CD4-positive, alpha-beta memory T cell (primary cell): ENCODE measurements at regions of chr6 and their contacts with region 1.

Region 1: DNA sequence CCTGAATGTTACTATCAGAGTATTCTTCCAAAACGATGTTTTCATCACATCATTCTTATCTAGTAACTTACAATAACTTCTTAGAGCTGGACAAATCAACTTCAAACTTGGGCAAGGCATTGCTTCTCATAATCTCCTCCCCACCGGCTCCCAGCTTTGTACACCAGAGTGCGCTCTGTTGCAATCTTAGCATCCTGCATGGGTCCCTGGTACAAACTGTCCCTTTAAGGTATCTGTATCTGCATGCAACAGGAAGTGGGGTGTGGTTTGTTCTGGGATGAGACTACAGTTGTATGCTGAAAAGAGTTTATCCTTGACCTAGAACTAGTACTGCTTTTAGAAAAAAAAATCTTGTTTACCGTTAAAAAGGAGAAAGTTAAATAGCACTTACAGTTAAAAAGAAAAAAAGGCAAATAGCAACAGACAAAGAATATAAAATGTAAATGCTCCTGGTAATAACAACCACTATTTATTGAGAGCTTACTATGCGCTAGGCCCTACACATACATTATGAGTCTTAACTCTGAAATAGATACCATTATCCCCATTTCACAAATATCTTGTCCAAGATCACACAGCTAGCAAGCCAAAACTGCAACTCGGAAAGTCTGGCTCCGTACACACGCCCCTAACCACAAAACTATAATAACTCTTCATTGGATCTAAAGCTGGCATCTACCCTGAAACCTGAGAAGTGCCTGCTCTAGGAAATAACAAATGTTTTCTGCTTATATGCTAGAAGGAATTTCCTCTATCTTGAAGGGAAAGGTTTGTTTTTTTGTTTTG is 9.8 kb upstream of the HECA start:
- DNase-seq: peak; percentile 85 to 88 (median 86)
- H3K4me3 ChIP-seq: peak overlapping the region in 1 of 2 donors; percentile 34
- H3K4me3 Mint-ChIP-seq: peak overlapping the region; percentile 57 to 80 (median 71)
- H3K27ac ChIP-seq: peak overlapping the region; percentile 55
- H3K27ac Mint-ChIP-seq: peak overlapping the region; percentile 79 to 98 (median 94)
- H3K4me1 ChIP-seq: peaks cover 55% of the 10 kb centered on the region
- H3K4me1 Mint-ChIP-seq: peaks cover 43 to 63% (median 51%) of the 10 kb centered on the region in 4 donors
- H3K27me3 ChIP-seq: no peaks in the 10 kb centered on the region
- H3K27me3 Mint-ChIP-seq: no peaks in the 10 kb centered on the region

Region 2: DNA sequence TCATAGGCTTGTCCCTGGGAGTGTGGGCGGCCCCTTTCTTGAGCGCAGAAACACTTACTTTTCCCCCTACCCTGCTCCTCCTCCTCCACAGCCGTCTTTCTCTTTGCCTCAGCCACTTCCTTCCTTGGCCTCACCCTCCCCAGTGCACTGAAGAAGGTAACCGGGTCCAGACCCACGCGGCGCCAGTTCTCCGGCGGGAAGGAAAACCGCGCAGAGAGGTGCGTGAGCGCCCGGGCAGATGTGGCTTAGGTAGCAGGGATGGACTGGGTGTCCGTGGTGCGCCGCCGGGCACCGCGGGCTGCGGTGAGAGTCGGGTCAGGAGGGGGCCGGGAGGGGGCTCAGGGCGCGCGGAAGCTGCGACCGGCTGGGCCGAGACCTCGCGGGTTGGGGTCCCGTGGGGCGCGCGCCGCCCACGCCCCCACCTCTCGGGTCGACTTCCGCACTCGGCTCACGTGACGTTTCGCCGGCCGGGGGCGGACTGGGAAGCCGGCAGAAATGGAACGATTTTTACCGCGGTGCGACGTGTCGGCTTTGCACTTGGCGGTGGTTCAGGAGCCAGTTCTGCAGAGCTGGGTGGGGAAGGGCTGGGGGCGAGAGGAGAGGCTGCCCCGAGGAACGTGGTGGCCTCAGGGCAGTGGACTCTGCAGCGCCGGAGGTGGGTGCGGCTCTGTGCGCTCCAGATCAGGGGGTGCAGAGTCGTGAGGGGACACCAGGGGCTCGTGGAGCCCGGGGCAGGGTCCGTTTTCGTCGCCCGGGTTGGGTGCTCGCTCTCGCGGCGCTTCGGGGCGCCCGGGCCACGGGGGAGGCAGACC is 96.2 kb before region 1 on chr6 and contains the start of gene ABRACL:
- CTCF ChIA-PET with region 1: interaction called, 3 read pairs
- POLR2A ChIA-PET with region 1: interaction called, 22 read pairs
- intact Hi-C with region 1: no loop called
- DNase-seq: peak; percentile 74 to 88 (median 75)
- H3K4me3 ChIP-seq: peak within 1 kb of the TSS; percentile 59 to 97
- H3K4me3 Mint-ChIP-seq: peak within 1 kb of the TSS in 5 of 8 donors; percentile 93 to 98 (median 95)
- H3K27ac ChIP-seq: peak within 1 kb of the TSS; percentile 88
- H3K27ac Mint-ChIP-seq: peak within 1 kb of the TSS; percentile 88 to 98 (median 92)
- H3K4me1 ChIP-seq: peaks cover 46% of the 10 kb centered on the region
- H3K4me1 Mint-ChIP-seq: peaks cover 22 to 34% (median 28%) of the 10 kb centered on the region in 4 donors
- H3K27me3 ChIP-seq: no peaks in the 10 kb centered on the region
- H3K27me3 Mint-ChIP-seq: no peaks in the 10 kb centered on the region
- total RNA-seq, gene ABRACL: 103 to 112 TPM

Region 3: DNA sequence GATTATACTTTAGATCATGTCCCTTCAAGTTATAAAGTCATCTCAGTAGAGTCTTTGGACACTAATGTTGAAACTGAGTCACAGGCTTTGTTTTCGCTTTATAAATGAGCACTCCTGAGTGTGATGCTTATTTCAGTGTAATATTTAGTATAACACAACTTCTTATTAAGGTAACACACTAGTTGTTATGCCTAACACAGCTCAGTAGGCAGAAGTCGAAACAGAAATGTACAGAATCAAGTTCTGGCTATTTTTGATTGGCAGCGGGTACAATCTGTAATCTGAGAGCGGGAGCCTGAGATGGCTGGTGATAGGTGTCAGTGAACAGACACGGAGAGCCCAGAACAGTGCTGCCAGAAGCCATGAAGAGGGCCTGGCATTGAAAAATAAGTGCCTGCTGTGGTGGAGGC is 21.2 kb after region 1 on chr6:
- CTCF ChIA-PET with region 1: interaction called, 7 read pairs
- POLR2A ChIA-PET with region 1: interaction called, 83 read pairs
- intact Hi-C with region 1: no loop called
- DNase-seq: no peak
- H3K4me3 ChIP-seq: peak overlapping the region; percentile 39 to 40
- H3K4me3 Mint-ChIP-seq: peak overlapping the region; percentile 66 to 90 (median 82)
- H3K27ac ChIP-seq: peak overlapping the region; percentile 50
- H3K27ac Mint-ChIP-seq: peak overlapping the region; percentile 69 to 92 (median 86)
- H3K4me1 ChIP-seq: peaks cover 97% of the 10 kb centered on the region
- H3K4me1 Mint-ChIP-seq: peaks cover 80 to 94% (median 87%) of the 10 kb centered on the region in 4 donors
- H3K27me3 ChIP-seq: no peaks in the 10 kb centered on the region
- H3K27me3 Mint-ChIP-seq: no peaks in the 10 kb centered on the region

Region 4: DNA sequence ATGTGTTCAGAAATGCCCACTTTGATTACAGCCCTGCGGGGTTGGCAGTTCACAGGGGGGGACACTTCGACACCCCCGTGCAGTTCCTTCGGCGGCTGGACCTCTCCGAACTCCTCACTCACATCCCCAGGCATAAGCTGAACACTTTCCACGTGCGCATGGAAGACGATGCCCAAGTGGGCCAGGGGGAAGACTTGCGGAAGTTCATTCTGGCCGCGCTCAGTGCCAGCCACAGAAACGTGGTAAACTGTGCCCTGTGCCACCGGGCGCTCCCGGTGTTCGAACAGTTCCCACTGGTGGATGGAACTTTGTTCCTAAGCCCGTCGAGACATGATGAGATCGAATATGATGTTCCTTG is 41.9 kb after region 1 on chr6:
- CTCF ChIA-PET with region 1: interaction called, 9 read pairs
- POLR2A ChIA-PET with region 1: interaction called, 50 read pairs
- intact Hi-C with region 1: no loop called
- DNase-seq: peak in 1 of 5 donors; percentile 36
- H3K4me3 ChIP-seq: no peak overlapping the region
- H3K4me3 Mint-ChIP-seq: peak overlapping the region in 3 of 8 donors; percentile 11 to 31 (median 14)
- H3K27ac ChIP-seq: no peak overlapping the region
- H3K27ac Mint-ChIP-seq: peak overlapping the region in 6 of 7 donors; percentile 29 to 86 (median 82)
- H3K4me1 ChIP-seq: peaks cover 98% of the 10 kb centered on the region
- H3K4me1 Mint-ChIP-seq: peaks cover 75 to 96% (median 91%) of the 10 kb centered on the region in 4 donors
- H3K27me3 ChIP-seq: no peaks in the 10 kb centered on the region
- H3K27me3 Mint-ChIP-seq: no peaks in the 10 kb centered on the region

Region 5: GRCh38 chr6:139230391-139230840 is 105.3 kb after region 1 on chr6:
- CTCF ChIA-PET with region 1: interaction called, 15 read pairs
- POLR2A ChIA-PET with region 1: interaction called, 3 read pairs
- intact Hi-C with region 1: no loop called
- DNase-seq: peak in 4 of 5 donors; percentile 17 to 31 (median 22)
- H3K4me3 ChIP-seq: no peak overlapping the region
- H3K4me3 Mint-ChIP-seq: no peak overlapping the region
- H3K27ac ChIP-seq: no peak overlapping the region
- H3K27ac Mint-ChIP-seq: peak overlapping the region in 2 of 7 donors; percentile 19 to 65
- H3K4me1 ChIP-seq: no peaks in the 10 kb centered on the region
- H3K4me1 Mint-ChIP-seq: peaks cover 6 to 13% (median 9%) of the 10 kb centered on the region in 4 donors
- H3K27me3 ChIP-seq: no peaks in the 10 kb centered on the region
- H3K27me3 Mint-ChIP-seq: no peaks in the 10 kb centered on the region

Region 6: DNA sequence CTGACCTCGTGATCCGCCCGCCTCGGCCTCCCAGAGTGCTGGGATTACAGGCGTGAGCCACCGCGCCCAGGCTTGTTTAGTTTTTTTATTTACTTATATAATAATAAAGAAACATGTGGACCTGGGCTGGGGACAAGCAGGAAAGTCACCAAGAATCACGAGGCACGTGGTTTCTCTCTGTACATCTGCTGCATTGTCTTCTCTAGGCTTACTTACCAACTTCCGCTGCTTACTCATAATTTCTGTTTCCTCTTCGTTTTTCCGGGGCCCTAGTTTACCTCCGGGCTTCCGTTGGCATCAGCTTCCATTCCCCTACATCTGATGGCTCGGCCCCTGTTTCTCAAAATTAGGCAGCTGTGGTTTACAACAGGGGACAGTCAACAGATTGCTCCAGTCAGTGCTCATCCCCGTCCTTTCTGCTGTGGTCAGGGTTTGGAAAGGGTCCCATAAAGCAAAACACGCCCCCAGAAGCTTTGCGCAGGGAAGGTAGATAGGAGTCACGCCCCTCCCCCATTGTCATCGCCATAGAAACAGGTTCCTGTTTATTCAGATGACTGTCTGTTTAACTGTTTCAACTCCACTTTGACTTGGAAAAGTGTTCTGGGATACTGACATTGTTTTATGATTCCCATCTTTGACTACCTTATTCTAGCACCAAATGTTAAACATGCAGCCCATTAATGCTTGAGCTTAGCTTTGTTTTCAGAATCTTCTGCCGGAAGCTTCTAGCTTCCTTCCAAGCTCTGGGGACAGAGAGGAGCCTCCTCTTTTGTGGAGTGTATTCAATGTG is 198.6 kb after region 1 on chr6:
- CTCF ChIA-PET with region 1: interaction called, 5 read pairs
- POLR2A ChIA-PET with region 1: interaction called, 16 read pairs
- intact Hi-C with region 1: no loop called
- DNase-seq: peak; percentile 86 to 91 (median 89)
- H3K4me3 ChIP-seq: peak overlapping the region; percentile 33 to 61
- H3K4me3 Mint-ChIP-seq: peak overlapping the region; percentile 78 to 92 (median 88)
- H3K27ac ChIP-seq: peak overlapping the region; percentile 87
- H3K27ac Mint-ChIP-seq: peak overlapping the region; percentile 98 to 100 (median 98)
- H3K4me1 ChIP-seq: peaks cover 35% of the 10 kb centered on the region
- H3K4me1 Mint-ChIP-seq: peaks cover 21 to 43% (median 34%) of the 10 kb centered on the region in 4 donors
- H3K27me3 ChIP-seq: no peaks in the 10 kb centered on the region
- H3K27me3 Mint-ChIP-seq: no peaks in the 10 kb centered on the region

Region 7: DNA sequence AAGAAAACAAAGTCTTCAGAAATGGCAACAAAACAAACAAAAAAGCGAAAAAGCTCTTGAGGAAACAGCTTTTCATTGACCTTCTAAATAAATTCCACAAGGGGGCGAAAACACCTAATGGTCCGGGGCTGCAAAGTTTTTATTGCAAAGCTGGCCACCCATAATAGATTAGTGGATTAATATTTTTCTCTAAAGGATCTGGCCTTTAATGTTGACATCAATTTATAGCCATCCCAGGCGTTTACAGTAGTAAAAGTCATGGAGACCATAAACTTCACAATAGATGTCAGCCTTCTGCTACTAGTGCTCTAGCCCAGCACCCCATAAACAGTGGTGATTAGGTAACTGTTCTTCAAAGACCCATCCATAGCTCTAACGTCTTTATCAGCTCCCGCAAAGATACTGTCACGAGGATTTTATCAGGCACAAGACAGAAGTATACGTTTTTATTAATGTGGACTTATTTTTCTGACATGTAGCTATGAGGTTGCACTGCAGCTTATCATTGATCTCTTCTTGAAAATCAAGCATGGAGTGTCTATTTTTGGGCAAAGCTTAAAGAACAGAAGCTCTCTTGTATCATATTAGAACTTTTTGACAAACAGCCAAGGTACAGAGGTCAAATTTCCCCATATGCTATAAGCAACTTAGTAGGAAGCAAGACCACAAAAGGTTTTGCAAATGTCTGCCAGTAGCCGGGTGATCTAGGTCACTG is 244.6 kb after region 1 on chr6:
- CTCF ChIA-PET with region 1: interaction called, 50 read pairs
- POLR2A ChIA-PET with region 1: interaction called, 68 read pairs
- intact Hi-C with region 1: loop called (anchors 1 kb)
- DNase-seq: peak; percentile 36 to 54 (median 48)
- H3K4me3 ChIP-seq: no peak overlapping the region
- H3K4me3 Mint-ChIP-seq: peak overlapping the region; percentile 60 to 100 (median 84)
- H3K27ac ChIP-seq: peak overlapping the region; percentile 40
- H3K27ac Mint-ChIP-seq: peak overlapping the region; percentile 80 to 99 (median 88)
- H3K4me1 ChIP-seq: peaks cover 40% of the 10 kb centered on the region
- H3K4me1 Mint-ChIP-seq: peaks cover 29 to 62% (median 36%) of the 10 kb centered on the region in 4 donors
- H3K27me3 ChIP-seq: no peaks in the 10 kb centered on the region
- H3K27me3 Mint-ChIP-seq: no peaks in the 10 kb centered on the region

Region 8: GRCh38 chr6:139508023-139508422 is 382.9 kb after region 1 on chr6:
- CTCF ChIA-PET with region 1: no interaction called
- POLR2A ChIA-PET with region 1: no interaction called
- intact Hi-C with region 1: no loop called
- DNase-seq: no peak
- H3K4me3 ChIP-seq: no peak overlapping the region
- H3K4me3 Mint-ChIP-seq: no peak overlapping the region
- H3K27ac ChIP-seq: no peak overlapping the region
- H3K27ac Mint-ChIP-seq: no peak overlapping the region
- H3K4me1 ChIP-seq: no peaks in the 10 kb centered on the region
- H3K4me1 Mint-ChIP-seq: no peaks in the 10 kb centered on the region
- H3K27me3 ChIP-seq: no peaks in the 10 kb centered on the region
- H3K27me3 Mint-ChIP-seq: no peaks in the 10 kb centered on the region